ENCODE measurements at regions of chr10 and their contacts with region 1.

Region 1: DNA sequence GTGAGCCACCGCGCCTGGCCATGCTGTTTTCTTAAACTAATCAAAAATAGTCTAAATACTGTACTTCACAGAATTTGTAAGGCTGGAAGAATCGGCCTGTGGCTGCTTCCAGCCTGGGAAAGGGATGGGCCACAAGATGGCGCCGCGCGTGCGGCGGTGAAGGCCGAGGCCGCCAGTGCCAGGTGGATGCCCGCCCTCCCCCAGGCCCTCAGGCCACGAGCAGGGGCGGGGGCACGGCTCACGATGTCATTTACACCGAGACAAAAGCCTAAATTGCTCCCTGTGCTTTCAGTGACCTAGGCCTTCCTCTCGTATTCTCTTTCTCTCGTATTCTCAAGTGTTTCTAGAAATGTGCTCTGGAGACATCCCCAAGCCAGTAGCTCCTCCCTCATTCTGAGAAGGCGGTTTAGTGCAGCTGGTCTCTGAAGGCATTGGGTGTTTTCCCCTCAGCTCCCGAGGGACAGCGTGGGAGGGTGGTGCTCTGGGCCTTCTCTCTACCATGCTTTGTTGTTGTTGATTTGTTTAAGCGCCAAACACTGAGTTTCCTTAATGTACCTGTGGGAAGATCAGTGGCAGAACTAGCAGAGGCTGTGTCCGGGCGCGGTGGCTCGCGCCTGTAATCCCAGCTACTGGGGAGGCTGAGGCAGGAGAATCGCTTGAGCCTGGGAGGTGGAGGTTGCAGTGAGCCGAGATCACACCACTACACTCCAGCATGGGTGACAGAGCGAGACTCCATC is 68.4 kb downstream of the CDC123 start:
- DNase-seq: peak; percentile 74 to 91
- H3K4me3 ChIP-seq: peak overlapping the region; percentile 30 to 42 (median 41)
- H3K27ac ChIP-seq: peak overlapping the region in 3 of 5 donors; percentile 58 to 77 (median 61)
- H3K4me1 ChIP-seq: peaks cover 9 to 29% (median 15%) of the 10 kb centered on the region in 4 donors
- H3K27me3 ChIP-seq: no peaks in the 10 kb centered on the region
- CTCF ChIP-seq: peak in 5 of 7 experiments; percentile 32 to 85 (median 72)
- EP300 ChIP-seq: no peak
- POLR2A ChIP-seq: no peak

Region 2: GRCh38 chr10:12710594-12711349 is 446.4 kb after region 1 on chr10:
- intact Hi-C with region 1: loop called (anchors 10 kb)
- DNase-seq: peak; percentile 75 to 91
- H3K4me3 ChIP-seq: no peak overlapping the region
- H3K27ac ChIP-seq: peak overlapping the region in 3 of 5 donors; percentile 8 to 78 (median 55)
- H3K4me1 ChIP-seq: peaks cover 6 to 56% (median 42%) of the 10 kb centered on the region in 4 donors
- H3K27me3 ChIP-seq: no peaks in the 10 kb centered on the region
- CTCF ChIP-seq: peak in 5 of 7 experiments; percentile 81 to 85 (median 84)
- EP300 ChIP-seq: no peak
- POLR2A ChIP-seq: no peak

Measured in stomach (tissue), 19 donors.